G401 (cell line): ENCODE measurements at regions of chr11 and their contacts with region 1.

Region 1: GRCh38 chr11:63909591-63910506 is 7.1 kb downstream of the RCOR2 start:
- DNase-seq: no peak

Region 2: DNA sequence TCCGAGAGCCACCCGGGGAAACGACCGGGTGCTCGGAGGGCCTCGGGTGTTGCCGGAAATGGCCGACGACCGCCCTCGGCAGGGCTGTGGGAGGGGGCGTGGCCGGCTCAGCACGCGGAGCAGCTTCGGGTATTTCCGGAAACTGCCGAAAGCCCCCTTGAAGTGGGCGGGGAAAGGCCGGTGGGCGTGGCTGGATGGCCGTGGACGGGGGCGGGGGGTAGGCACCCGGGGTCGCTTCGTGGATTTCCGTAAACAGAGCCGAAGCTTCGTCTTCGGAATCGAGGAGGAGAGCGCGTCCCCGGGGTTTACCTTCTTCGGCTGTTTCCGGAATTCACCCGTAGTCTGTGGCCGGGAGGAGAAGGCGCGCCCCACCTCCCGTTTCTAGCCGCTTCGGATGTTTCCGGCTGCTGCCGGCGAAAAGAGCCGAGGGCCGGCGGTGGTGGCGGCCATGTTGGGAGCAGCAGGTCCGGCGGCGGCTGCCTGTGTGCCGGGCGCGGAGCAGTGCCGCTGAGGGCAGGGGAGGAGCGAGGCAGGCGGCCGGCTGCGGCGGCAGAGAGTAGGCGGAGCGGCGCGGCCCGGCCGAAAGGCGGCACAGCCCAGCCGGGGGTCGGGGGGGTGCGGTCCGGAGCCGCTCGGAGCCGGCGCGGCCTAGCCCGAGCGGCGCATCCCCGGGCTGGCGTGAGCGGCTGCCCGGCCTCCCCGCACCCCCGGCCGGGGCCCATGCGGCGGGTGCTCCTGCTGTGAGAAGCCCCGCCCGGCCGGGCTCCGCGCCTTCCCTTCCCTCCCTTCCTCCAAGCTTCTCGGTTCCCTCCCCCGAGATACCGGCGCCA is 71.0 kb before region 1 on chr11 and contains the start of gene MARK2:
- in situ Hi-C with region 1: loop called (anchors 5 kb)
- DNase-seq: peak; percentile 99
- total RNA-seq, gene MARK2: 21.0 and 22.5 TPM in 2 replicates

Region 3: DNA sequence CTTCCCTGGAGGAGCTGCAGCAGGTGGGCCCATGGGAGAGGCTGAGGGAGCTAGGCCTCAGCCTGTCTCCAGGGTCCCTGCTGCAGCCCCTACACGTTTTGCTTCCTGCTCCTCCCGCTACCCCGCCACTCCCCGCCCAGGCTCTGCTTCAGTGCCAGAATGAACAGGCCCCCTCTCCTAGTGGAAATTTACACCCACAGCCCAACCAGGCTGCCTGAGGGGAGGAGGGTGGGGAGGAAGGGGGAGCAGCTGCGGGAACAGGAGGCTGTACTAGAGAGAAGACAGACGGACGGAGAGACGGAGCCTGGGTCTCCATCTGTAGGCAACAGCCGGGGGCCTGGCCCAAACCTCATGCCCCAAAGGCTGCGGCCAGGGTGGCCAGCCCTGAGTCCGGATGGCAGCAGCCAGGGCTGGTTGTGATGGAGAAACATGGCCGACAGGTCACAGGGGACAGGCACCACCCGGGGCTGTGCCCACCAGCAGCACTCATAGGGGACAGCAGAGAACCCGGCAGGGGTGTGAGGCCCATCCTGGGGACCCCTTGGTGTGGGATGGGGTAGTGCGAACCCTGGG is 146.4 kb after region 1 on chr11:
- in situ Hi-C with region 1: no loop called
- DNase-seq: peak; percentile 87